Sigmoid colon (tissue), 7 donors: ENCODE measurements at regions of chr7 and their contacts with region 1.

Region 1: DNA sequence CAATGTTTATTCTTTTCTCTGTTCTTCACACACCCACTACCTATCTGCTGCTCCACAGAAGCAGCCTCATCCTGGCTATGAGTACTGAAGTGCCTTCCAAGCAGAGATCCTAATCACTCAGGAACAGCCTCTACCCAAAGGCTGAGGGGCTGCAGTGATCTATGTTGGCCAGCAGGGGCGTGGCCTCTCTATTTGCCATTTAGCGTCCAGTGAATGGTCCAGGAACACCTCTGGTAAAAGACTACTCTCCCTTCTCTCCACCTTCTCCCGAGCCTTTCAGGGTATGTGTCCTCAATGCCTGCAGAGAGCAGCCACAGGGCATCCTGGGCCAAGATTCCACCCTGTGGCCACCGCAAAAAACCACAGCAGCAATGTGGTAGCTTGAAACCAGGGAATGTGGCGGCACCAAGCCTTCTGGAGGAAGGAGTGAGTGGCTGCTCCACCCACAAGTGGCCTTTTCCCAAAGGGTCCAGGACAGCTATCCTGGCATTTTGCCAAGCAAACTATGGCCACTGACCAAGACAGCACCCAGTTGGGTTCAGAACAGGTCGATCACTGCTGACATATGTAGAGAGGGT is 70.9 kb downstream of the SYPL1 start:
- DNase-seq: peak; percentile 61
- H3K4me3 ChIP-seq: no peak overlapping the region
- H3K27ac ChIP-seq: no peak overlapping the region
- H3K4me1 ChIP-seq: peaks cover 0 to 22% (median 18%) of the 10 kb centered on the region in 4 donors
- H3K27me3 ChIP-seq: no peaks in the 10 kb centered on the region
- CTCF ChIP-seq: peak in 3 of 4 experiments; percentile 35 to 54 (median 37)
- EP300 ChIP-seq: no peak
- POLR2A ChIP-seq: no peak

Region 2: DNA sequence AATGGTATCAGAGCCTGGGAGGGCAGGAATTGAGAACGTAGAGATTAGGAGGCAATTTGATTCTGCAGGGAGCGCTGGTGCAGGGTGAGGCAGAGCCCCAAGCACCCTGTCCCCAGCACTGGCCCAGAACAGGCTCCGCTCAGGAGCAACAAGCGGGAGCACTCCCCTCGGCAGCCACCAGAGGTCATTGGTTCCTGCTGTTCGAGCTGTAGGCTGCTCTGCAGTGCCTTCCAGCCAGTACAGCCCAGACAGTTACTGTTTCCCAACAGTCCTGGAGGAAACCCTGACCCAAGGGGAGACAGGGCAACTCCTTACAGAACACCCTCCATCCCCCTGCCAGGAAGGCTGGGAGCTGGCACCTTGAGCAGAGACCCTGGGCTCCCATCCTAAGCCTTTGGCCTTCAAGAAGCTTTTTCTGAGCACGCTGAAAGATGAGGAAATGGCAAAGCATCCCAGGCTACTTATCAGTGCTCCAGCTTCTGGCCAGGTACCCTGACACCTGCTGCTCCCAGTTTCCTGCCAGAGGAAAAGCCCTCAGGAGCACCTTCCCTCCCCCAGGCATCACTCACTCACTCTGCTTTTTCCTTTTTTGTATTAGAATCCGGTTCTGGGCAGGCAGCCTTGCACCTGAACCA is 388.8 kb before region 1 on chr7:
- intact Hi-C with region 1: loop called (anchors 2 kb)
- DNase-seq: peak; percentile 92
- H3K4me3 ChIP-seq: no peak overlapping the region
- H3K27ac ChIP-seq: no peak overlapping the region
- H3K4me1 ChIP-seq: peaks cover 0 to 48% (median 36%) of the 10 kb centered on the region in 4 donors
- H3K27me3 ChIP-seq: no peaks in the 10 kb centered on the region
- CTCF ChIP-seq: peak; percentile 76 to 91 (median 84)
- EP300 ChIP-seq: no peak
- POLR2A ChIP-seq: no peak

Region 3: DNA sequence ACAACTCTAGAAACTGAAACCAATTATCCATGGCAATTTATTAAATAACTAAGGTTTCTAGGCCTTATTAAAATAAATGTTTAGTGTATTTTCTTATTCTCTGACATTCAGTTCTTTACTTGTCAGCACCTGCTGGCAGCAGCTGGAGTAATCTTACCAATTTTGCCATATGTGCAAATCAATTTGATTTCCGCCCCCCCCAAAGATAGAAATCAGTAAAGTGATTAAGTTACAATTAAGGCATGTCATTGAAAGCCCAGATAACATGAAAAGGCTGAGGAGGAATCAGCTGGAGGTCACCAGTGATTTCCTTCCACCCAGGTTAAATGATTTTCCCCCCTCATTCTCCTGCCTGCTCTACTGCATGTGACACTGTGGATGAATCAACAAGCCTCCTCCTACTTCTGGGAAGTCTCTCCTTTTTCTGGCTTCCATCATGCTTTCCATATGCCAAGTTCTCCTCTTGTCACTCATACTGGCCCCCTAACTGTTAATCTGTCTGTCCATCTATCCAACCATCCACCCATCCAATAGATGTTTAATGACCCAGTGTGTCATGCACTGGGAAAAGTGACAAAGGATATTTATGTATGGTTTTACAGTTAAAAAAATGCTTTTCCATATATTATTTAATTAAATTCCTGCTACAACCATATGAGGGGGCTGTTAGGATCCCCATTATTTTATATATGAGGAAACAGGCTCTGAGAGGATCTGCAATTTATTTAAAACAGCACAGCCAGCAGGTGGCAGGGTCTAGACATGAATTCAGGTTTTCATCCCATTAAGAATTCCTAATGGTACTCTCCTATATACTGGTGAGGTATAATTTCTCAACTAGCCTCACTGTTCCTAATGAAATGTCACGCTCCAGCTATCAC is 281.3 kb before region 1 on chr7:
- intact Hi-C with region 1: loop called (anchors 1 kb)
- DNase-seq: peak; percentile 76
- H3K4me3 ChIP-seq: no peak overlapping the region
- H3K27ac ChIP-seq: no peak overlapping the region
- H3K4me1 ChIP-seq: peaks cover 0 to 11% (median 7%) of the 10 kb centered on the region in 4 donors
- H3K27me3 ChIP-seq: no peaks in the 10 kb centered on the region
- CTCF ChIP-seq: peak; percentile 9 to 69 (median 55)
- EP300 ChIP-seq: no peak
- POLR2A ChIP-seq: no peak

Region 4: DNA sequence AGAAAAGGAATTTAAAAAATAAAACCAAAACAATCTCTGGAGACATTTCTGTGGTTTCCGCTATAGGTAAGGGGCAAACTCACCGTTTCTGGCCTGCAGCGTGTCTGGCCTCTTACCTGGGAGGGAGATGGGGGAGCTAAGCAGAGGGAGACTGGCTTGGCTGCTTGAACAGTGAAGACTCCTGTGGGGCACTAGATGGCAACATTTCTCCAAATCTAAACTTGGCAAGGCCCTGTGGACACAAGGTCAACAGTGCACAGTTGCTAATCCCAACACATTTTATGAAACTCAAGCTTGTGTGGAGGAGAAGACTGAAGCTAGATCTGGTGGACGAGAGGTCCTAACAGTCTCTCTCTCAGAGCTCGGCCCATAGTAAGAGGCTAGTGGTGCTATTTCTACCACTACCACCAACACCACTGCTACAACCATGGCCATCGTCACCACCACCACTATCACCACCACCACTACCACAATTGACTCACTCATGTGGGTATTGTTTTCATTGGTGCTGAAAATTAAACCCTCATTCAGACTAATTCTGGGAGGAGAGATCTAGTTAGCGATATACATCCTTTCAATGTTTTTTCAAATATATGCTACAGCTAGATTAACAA is 106.5 kb before region 1 on chr7:
- intact Hi-C with region 1: loop called (anchors 2 kb)
- DNase-seq: no peak
- H3K4me3 ChIP-seq: no peak overlapping the region
- H3K27ac ChIP-seq: peak overlapping the region in 3 of 4 donors; percentile 69 to 81 (median 80)
- H3K4me1 ChIP-seq: peaks cover 0 to 31% (median 22%) of the 10 kb centered on the region in 4 donors
- H3K27me3 ChIP-seq: no peaks in the 10 kb centered on the region
- CTCF ChIP-seq: no peak
- EP300 ChIP-seq: no peak
- POLR2A ChIP-seq: no peak

Region 5: DNA sequence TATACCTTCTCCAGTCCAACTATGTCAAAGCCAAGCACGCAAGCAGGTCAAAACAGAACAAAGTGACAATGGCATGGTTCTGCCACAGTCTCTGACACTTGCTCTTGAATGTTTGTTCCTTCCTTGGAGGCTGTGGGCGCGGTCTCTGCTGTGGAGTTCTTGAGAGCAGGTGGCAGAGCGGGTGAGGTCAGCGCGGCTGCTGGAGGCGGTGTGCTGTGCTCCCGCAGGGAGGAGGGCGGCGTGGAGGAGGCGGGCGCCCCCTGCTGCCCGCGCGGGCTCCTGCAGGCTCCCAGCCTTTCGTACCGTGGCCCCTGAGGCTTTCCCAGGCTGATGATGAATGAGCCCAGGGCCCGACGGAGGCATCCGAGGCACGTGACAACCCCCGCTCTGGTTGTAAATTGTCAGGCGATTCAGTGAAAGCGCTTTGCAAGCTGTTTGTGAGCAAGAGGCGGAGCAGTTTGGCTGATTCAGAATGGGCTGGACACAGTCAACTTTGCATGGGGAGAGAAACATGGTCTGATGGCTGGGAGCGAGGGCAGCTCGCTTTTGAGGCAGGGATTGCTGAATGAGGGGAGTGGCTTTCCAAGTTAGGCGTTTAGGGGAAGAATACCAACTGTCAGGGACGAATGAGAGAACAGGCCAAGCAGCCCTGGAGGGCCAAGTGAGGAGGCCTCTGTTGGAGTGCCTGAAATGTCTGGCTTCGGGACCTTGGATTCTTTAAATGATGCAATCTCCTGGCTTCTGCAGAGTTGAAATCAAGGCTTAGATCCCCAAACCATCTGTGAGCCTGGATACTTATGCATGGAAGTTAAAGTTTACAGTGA is 31.6 kb before region 1 on chr7:
- intact Hi-C with region 1: loop called (anchors 5 kb)
- DNase-seq: peak; percentile 96
- H3K4me3 ChIP-seq: peak overlapping the region in 2 of 4 donors; percentile 4 to 19
- H3K27ac ChIP-seq: peak overlapping the region; percentile 61 to 80 (median 76)
- H3K4me1 ChIP-seq: peaks cover 0 to 40% (median 33%) of the 10 kb centered on the region in 4 donors
- H3K27me3 ChIP-seq: no peaks in the 10 kb centered on the region
- CTCF ChIP-seq: peak; percentile 91 to 97 (median 95)
- EP300 ChIP-seq: peak in 1 of 4 donors; percentile 60
- POLR2A ChIP-seq: no peak